Activated CD4-positive, alpha-beta T cell treated with anti-CD3 and anti-CD28 coated beads for 36 hours (primary cell): ENCODE measurements at regions of chr21 and their contacts with region 1.

Region 1: GRCh38 chr21:37079211-37079824 is 6.3 kb downstream of the TTC3 start:
- DNase-seq: peak; percentile 53
- ATAC-seq: peak; percentile 73
- H3K4me3 Mint-ChIP-seq: no peak overlapping the region
- H3K27ac Mint-ChIP-seq: no peak overlapping the region
- H3K4me1 Mint-ChIP-seq: peaks cover 50% of the 10 kb centered on the region
- H3K27me3 Mint-ChIP-seq: no peaks in the 10 kb centered on the region

Region 2: GRCh38 chr21:36976882-36977651 is 102.3 kb before region 1 on chr21:
- CTCF ChIA-PET with region 1: no interaction called
- POLR2A ChIA-PET with region 1: no interaction called
- intact Hi-C with region 1: loop called in 1 of 2 experiments (anchors 5 kb)
- DNase-seq: peak; percentile 51
- ATAC-seq: peak; percentile 79
- H3K4me3 Mint-ChIP-seq: no peak overlapping the region
- H3K27ac Mint-ChIP-seq: peak overlapping the region; percentile 42
- H3K4me1 Mint-ChIP-seq: peaks cover 22% of the 10 kb centered on the region
- H3K27me3 Mint-ChIP-seq: peaks cover 2% of the 10 kb centered on the region

Region 3: DNA sequence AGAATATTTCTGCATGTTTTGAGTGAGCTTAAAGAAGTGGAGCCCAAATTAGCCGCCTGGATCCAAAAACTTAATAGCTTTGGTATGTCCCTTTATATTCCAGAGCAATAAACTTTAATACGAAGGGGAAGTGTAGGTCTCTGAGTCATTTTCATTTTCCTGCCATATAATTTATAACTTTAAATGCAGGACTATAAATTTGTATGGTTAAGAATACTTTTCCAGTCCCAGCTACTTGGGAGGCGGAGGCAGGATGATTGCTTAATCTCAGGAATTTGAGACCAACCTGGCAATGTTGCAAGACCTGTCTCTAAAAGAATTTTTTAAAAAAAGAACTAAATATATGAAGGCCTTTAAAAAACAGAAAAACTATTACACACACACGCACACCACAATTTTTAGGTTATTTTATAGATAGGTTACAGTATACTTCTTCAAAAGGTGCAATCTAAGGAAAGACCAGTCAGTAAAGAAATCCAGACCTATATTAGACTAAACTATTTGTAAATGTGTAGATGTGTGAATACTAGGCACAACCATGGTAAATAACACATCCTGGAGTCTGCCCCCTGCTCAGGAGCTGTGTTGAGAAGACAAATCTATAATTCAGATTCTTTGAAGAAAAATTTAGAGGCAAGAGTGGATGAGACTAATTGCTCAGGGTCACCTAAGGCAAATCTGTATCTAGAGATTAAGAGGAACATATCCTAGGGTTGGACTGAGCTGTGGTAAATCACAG is 74.0 kb after region 1 on chr21:
- CTCF ChIA-PET with region 1: no interaction called
- POLR2A ChIA-PET with region 1: no interaction called
- intact Hi-C with region 1: no loop called
- DNase-seq: no peak
- ATAC-seq: no peak
- H3K4me3 Mint-ChIP-seq: no peak overlapping the region
- H3K27ac Mint-ChIP-seq: no peak overlapping the region
- H3K4me1 Mint-ChIP-seq: no peaks in the 10 kb centered on the region
- H3K27me3 Mint-ChIP-seq: no peaks in the 10 kb centered on the region

Region 4: DNA sequence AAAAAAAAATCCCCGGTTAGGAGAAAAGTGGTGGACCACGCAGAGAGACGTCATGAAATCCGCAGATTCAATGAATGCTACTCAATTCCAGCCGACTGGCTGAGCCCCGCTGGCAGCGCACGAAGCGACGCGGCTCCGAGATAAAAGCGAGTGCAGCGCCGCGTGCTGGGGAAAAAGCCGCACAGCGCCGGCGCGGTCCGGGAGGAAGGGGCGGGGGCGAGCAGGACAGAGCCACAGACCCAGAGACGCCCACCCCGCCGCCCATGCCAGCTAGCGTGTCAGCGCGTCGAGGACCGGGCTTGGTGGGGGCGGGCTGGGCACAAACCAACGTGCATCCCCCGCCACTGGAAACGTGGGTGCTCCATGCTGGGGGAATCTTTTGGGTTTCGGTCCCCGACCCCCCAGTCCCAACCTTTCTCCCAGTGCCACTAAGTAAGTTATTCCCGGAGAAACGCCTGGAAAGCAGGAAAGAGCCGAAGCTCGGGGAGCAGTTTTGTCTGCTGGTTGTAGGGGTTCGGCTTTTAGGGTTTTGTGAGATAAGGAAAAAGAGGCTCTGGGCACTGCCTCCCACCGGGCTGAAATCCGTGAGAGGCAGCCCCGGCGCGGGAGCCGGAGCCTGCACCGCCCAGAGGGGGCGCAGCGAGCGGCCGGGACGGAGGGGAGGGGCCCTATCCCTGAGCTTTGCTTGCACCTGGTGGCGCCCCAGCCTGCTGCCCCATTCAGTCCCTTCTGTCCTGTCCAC is 837.2 kb after region 1 on chr21 and contains the start of gene KCNJ6:
- CTCF ChIA-PET with region 1: no interaction called
- POLR2A ChIA-PET with region 1: no interaction called
- intact Hi-C with region 1: no loop called
- DNase-seq: peak; percentile 59
- ATAC-seq: peak; percentile 44
- H3K4me3 Mint-ChIP-seq: no peak within 1 kb of the TSS
- H3K27ac Mint-ChIP-seq: no peak within 1 kb of the TSS
- H3K4me1 Mint-ChIP-seq: peaks cover 2% of the 10 kb centered on the region
- H3K27me3 Mint-ChIP-seq: peaks cover 59% of the 10 kb centered on the region
- total RNA-seq, gene KCNJ6: not detected